ENCODE measurements at regions of chr2 and their contacts with region 1.

Region 1: DNA sequence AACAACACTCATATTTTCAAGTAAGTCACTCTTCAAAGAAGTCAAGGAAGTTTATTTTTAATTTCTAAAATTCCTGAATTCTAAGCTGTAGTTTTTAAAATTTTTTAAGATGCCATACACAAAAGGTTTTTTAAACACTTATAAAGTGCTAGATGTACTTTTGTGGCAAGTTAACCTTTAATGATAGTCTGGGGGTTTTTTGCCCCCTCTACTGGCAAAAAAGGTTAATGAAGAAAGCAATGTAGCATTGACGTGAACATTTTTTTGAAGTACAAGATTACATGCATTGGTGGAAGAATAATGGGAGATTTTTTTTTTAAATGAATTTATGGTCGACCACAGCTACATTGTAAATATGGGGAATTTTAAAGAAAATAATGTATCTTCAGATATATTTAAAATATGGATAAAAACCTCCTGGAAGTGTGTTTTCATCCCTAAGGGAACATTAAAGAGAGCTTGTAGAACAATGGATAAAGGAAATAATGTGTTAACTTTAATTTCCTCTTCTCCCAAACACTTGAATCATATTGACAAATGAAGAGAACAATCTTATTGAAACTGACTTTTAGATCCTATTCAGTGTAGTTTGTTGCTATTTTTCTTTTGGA is 12.6 kb downstream of the ITPRID2 start:
- DNase-seq: peak in 6 of 9 donors; percentile 19 to 50 (median 40)
- ATAC-seq: peak; percentile 66
- H3K4me3 ChIP-seq: no peak overlapping the region
- H3K4me3 Mint-ChIP-seq: no peak overlapping the region
- H3K27ac ChIP-seq: no peak overlapping the region
- H3K27ac Mint-ChIP-seq: no peak overlapping the region
- H3K4me1 ChIP-seq: peaks cover 0 to 6% of the 10 kb centered on the region in 2 donors
- H3K4me1 Mint-ChIP-seq: peaks cover 9 to 41% (median 25%) of the 10 kb centered on the region in 7 donors
- H3K27me3 ChIP-seq: no peaks in the 10 kb centered on the region
- H3K27me3 Mint-ChIP-seq: no peaks in the 10 kb centered on the region

Region 2: DNA sequence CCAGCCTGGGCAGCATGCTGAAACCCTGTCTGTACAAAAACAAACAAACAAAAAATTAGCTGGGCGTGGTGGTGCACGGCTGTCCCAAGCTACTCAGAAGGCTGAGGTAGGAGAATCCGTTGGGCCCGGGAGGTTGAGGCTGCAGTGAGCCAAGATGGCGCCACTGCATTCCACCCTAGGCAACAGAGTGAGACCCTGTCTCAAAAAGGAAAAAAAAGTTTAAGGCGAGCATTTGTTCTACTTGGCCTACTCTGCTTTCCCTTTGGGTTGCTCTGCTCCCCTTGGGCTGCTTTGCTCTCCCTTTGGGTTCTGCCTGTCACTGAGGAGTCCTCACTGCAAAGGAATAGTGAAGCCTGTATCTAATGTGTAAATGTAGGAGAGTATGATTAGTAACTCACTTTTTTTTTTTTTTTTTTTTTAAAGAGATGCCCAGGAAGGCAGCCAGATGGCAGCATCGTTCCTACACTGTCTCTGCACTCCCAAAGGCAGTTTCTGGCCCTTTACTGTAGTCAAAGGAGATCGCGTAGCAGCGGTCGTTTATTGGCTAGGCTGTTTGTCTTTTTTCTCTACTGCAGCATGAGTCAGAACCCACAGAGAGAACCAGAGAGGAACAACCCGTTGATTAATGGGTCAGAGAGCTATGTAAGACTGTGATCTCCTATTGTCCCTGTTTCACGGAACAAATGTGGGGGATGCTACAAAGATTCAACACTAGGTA is 1778.7 kb before region 1 on chr2:
- CTCF ChIA-PET with region 1: interaction called, 3 read pairs
- POLR2A ChIA-PET with region 1: no interaction called
- intact Hi-C with region 1: loop called in 1 of 2 experiments (anchors 1 kb)
- DNase-seq: peak in 7 of 9 donors; percentile 18 to 43 (median 27)
- ATAC-seq: peak; percentile 86
- H3K4me3 ChIP-seq: no peak overlapping the region
- H3K4me3 Mint-ChIP-seq: peak overlapping the region in 4 of 10 donors; percentile 4 to 58 (median 24)
- H3K27ac ChIP-seq: no peak overlapping the region
- H3K27ac Mint-ChIP-seq: no peak overlapping the region
- H3K4me1 ChIP-seq: no peaks in the 10 kb centered on the region
- H3K4me1 Mint-ChIP-seq: peaks cover 0 to 6% (median 3%) of the 10 kb centered on the region in 7 donors
- H3K27me3 ChIP-seq: no peaks in the 10 kb centered on the region
- H3K27me3 Mint-ChIP-seq: peaks cover 0 to 26% (median 13%) of the 10 kb centered on the region in 5 donors

Region 3: GRCh38 chr2:181077128-181077709 is 826.9 kb before region 1 on chr2:
- CTCF ChIA-PET with region 1: no interaction called
- POLR2A ChIA-PET with region 1: no interaction called
- intact Hi-C with region 1: loop called (anchors 1 to 10 kb)
- DNase-seq: peak in 7 of 9 donors; percentile 49 to 76 (median 64)
- ATAC-seq: peak; percentile 90
- H3K4me3 ChIP-seq: no peak overlapping the region
- H3K4me3 Mint-ChIP-seq: no peak overlapping the region
- H3K27ac ChIP-seq: no peak overlapping the region
- H3K27ac Mint-ChIP-seq: no peak overlapping the region
- H3K4me1 ChIP-seq: no peaks in the 10 kb centered on the region
- H3K4me1 Mint-ChIP-seq: peaks cover 0 to 11% (median 0%) of the 10 kb centered on the region in 7 donors
- H3K27me3 ChIP-seq: no peaks in the 10 kb centered on the region
- H3K27me3 Mint-ChIP-seq: peaks cover 0 to 14% (median 0%) of the 10 kb centered on the region in 5 donors

Region 4: DNA sequence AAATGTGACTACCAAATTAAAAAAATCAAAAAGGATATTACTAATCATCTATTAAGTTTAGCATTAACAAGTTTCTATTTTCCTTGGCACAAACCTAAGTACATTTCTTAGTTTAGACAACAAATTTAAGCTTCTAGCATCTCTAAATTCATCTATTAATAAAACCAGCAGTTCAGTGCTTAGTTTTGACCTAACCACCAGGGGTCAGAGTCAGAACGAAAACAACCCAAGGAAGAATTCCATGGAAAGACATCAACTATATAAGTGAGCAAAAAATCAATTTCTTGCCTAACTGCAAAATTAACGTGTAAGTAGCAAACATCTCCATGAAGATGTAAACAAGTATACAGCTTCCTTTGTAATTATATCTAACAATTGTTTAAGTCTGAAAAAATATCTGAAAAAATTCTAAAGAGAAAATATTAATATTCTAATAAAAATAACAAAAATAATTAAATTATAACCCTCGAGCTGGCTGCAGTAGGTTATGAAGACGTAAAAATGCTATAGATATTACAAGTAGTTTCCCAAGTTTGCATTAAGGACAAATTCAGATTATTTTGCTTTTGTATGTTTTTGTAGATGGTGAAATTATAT is 330.9 kb before region 1 on chr2:
- CTCF ChIA-PET with region 1: no interaction called
- POLR2A ChIA-PET with region 1: no interaction called
- intact Hi-C with region 1: loop called in 1 of 2 experiments (anchors 5 kb)
- DNase-seq: peak in 1 of 9 donors; percentile 13
- ATAC-seq: no peak
- H3K4me3 ChIP-seq: no peak overlapping the region
- H3K4me3 Mint-ChIP-seq: no peak overlapping the region
- H3K27ac ChIP-seq: no peak overlapping the region
- H3K27ac Mint-ChIP-seq: no peak overlapping the region
- H3K4me1 ChIP-seq: no peaks in the 10 kb centered on the region
- H3K4me1 Mint-ChIP-seq: peaks cover 0 to 3% (median 1%) of the 10 kb centered on the region in 7 donors
- H3K27me3 ChIP-seq: peaks cover 0 to 4% of the 10 kb centered on the region in 2 donors
- H3K27me3 Mint-ChIP-seq: peaks cover 0 to 25% (median 4%) of the 10 kb centered on the region in 5 donors

Region 5: GRCh38 chr2:181742922-181743722 is 161.0 kb before region 1 on chr2:
- CTCF ChIA-PET with region 1: interaction called, 9 read pairs
- POLR2A ChIA-PET with region 1: no interaction called
- intact Hi-C with region 1: loop called (anchors 1 kb)
- DNase-seq: peak in 5 of 9 donors; percentile 17 to 35 (median 29)
- ATAC-seq: peak; percentile 49
- H3K4me3 ChIP-seq: no peak overlapping the region
- H3K4me3 Mint-ChIP-seq: no peak overlapping the region
- H3K27ac ChIP-seq: no peak overlapping the region
- H3K27ac Mint-ChIP-seq: no peak overlapping the region
- H3K4me1 ChIP-seq: no peaks in the 10 kb centered on the region
- H3K4me1 Mint-ChIP-seq: no peaks in the 10 kb centered on the region
- H3K27me3 ChIP-seq: no peaks in the 10 kb centered on the region
- H3K27me3 Mint-ChIP-seq: peaks cover 0 to 22% (median 3%) of the 10 kb centered on the region in 5 donors

Region 6: GRCh38 chr2:181891966-181892798 is 11.9 kb before region 1 on chr2:
- CTCF ChIA-PET with region 1: interaction called, 4 read pairs
- POLR2A ChIA-PET with region 1: interaction called, 3 read pairs
- intact Hi-C with region 1: loop called (anchors 1 kb)
- DNase-seq: peak; percentile 37 to 68 (median 65)
- ATAC-seq: peak; percentile 66
- H3K4me3 ChIP-seq: peak overlapping the region; percentile 85
- H3K4me3 Mint-ChIP-seq: peak overlapping the region; percentile 90 to 99 (median 97)
- H3K27ac ChIP-seq: peak overlapping the region; percentile 76
- H3K27ac Mint-ChIP-seq: peak overlapping the region; percentile 74 to 93 (median 89)
- H3K4me1 ChIP-seq: peaks cover 4 to 22% of the 10 kb centered on the region in 2 donors
- H3K4me1 Mint-ChIP-seq: peaks cover 25 to 49% (median 44%) of the 10 kb centered on the region in 7 donors
- H3K27me3 ChIP-seq: no peaks in the 10 kb centered on the region
- H3K27me3 Mint-ChIP-seq: peaks cover 11 to 35% (median 20%) of the 10 kb centered on the region in 5 donors